Heart right ventricle (tissue), 16 donors: ENCODE measurements at regions of chr6 and their contacts with region 1.

Region 1: GRCh38 chr6:41424370-41425058 is 89.1 kb downstream of the NCR2 start:
- DNase-seq: peak; percentile 58 to 88
- ATAC-seq: peak in 6 of 8 donors; percentile 34 to 67 (median 46)
- H3K4me3 ChIP-seq: no peak overlapping the region
- H3K27ac ChIP-seq: no peak overlapping the region
- H3K4me1 ChIP-seq: peaks cover 3 to 39% (median 28%) of the 10 kb centered on the region in 9 donors
- H3K27me3 ChIP-seq: peaks cover 0 to 51% (median 15%) of the 10 kb centered on the region in 7 donors
- CTCF ChIP-seq: peak; percentile 62 to 91 (median 85)

Region 2: DNA sequence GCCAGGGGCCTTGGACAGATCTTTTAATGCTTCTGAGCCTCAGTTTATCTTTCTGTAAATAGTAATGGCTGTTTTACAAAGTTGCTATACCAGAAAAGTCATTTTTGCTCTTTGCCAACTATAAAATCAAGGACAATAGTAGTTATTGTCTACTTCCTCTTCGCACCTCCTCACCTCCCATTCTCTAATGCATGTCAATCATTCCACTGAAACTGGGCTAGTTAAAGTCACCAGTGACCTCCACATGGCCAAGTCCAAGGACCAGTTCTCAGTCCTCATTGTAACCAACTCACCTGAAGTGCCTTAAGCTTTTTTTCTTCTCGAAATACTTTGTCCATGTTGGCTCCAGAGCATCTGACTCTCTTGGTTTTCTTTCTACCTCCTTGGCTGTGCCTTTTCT is 37.9 kb before region 1 on chr6:
- intact Hi-C with region 1: no loop called
- DNase-seq: no peak
- ATAC-seq: no peak
- H3K4me3 ChIP-seq: no peak overlapping the region
- H3K27ac ChIP-seq: no peak overlapping the region
- H3K4me1 ChIP-seq: no peaks in the 10 kb centered on the region
- H3K27me3 ChIP-seq: peaks cover 3 to 45% (median 28%) of the 10 kb centered on the region in 7 donors
- CTCF ChIP-seq: no peak

Region 3: GRCh38 chr6:41455818-41456217 is 31.3 kb after region 1 on chr6:
- intact Hi-C with region 1: loop called in 1 of 10 experiments (anchors 5 kb)
- DNase-seq: no peak
- ATAC-seq: no peak
- H3K4me3 ChIP-seq: no peak overlapping the region
- H3K27ac ChIP-seq: no peak overlapping the region
- H3K4me1 ChIP-seq: peaks cover 7 to 16% (median 14%) of the 10 kb centered on the region in 9 donors
- H3K27me3 ChIP-seq: peaks cover 0 to 5% (median 0%) of the 10 kb centered on the region in 7 donors
- CTCF ChIP-seq: no peak

Region 4: DNA sequence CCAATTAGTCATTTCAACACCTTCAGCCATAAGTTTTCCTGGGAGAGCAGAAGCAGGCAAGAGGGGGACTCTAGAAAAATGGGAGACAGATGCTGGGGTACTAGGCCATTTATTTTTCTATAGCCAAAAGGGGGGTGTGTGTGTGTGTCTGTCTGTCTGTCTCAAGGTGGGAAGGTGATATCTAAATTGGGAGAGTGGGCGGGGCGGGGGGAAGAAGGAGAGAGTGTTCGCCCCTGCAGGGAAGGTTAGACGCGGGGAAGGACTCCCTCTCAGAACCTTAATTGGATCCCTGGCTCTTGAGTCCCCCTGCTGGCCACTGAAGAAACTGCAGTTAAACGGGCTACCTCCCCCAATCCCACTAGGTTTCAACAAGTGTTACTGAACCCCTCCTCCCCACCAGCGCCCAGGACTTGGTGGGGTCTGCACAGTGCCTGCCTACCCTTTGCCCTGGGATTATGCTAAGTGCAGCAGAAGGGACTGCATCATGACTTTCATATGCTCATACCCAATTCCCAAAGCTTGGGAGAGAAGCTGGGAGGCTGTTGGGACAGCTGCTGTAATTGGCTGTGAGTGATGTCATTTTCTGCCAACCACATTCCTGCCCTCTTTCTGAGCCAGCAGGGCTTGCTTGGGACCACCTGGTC is 167.5 kb after region 1 on chr6:
- intact Hi-C with region 1: loop called in 9 of 10 experiments (anchors 1 to 5 kb)
- DNase-seq: peak; percentile 72 to 73
- ATAC-seq: peak; percentile 37 to 81 (median 60)
- H3K4me3 ChIP-seq: no peak overlapping the region
- H3K27ac ChIP-seq: no peak overlapping the region
- H3K4me1 ChIP-seq: peaks cover 0 to 8% (median 0%) of the 10 kb centered on the region in 9 donors
- H3K27me3 ChIP-seq: no peaks in the 10 kb centered on the region
- CTCF ChIP-seq: peak; percentile 90 to 97 (median 92)